CD8-positive, alpha-beta T cell (primary cell): ENCODE measurements at regions of chr18 and their contacts with region 1.

Region 1: DNA sequence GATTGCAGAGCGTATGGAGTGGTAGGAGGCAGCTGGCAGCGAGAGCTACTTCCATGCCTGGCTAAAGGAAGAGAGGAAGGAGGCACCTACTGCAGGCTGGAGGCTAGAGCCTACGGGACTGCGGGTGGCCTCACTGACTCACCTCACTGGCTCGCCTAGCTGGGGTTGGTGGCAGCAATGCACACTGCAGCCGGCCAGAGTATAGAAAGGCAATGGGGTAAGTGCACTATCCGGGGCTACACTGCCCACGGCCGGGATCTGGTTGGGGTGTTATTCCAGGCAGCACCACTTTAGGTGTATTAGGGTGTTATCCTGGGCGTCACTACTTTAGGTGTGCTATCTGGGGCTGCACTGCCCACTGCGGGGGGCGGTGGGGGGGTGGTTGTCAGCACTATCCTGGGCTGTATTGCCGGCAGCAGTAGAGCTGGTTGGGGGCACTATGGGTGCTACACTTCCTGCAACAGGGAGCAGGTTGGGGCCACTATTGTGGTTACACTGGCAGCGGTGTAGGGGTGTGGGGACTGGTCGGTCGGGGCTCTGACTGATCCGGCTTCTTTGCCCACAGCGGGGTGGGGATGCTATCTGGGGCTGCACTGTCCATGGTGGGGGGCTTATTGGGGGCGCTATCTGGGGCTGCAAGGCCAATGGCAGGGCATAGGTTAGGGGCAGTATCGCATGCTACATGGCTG is 33.3 kb upstream of the ANKRD62 start:
- DNase-seq: no peak
- ATAC-seq: no peak
- H3K4me3 ChIP-seq: no peak overlapping the region
- H3K4me3 Mint-ChIP-seq: no peak overlapping the region
- H3K27ac ChIP-seq: no peak overlapping the region
- H3K27ac Mint-ChIP-seq: no peak overlapping the region
- H3K4me1 ChIP-seq: no peaks in the 10 kb centered on the region
- H3K4me1 Mint-ChIP-seq: no peaks in the 10 kb centered on the region
- H3K27me3 ChIP-seq: no peaks in the 10 kb centered on the region
- H3K27me3 Mint-ChIP-seq: peaks cover 3% of the 10 kb centered on the region
- CTCF ChIP-seq: no peak

Region 2: DNA sequence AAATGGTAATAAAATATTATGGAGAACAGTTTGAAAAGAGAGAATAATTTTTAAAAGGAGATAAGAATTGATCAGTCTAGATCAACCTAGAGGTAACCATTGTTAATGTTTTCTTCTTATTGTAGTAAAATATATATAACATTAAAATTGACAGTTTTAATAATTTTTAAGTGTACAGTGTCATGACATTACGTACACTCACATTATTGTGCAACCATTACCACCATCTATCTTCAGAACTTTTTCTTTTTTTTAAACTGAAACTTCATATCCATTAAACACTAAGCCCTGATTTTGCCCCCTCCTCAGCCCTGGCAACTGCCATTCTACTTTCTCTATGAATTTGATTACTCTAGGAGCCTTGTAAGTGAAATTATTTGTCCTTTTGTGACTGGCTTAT is 1279.3 kb after region 1 on chr18:
- CTCF ChIA-PET with region 1: no interaction called
- POLR2A ChIA-PET with region 1: no interaction called
- intact Hi-C with region 1: loop called in 1 of 2 experiments (anchors 10 kb)
- DNase-seq: no peak
- ATAC-seq: no peak
- H3K4me3 ChIP-seq: no peak overlapping the region
- H3K4me3 Mint-ChIP-seq: no peak overlapping the region
- H3K27ac ChIP-seq: no peak overlapping the region
- H3K27ac Mint-ChIP-seq: no peak overlapping the region
- H3K4me1 ChIP-seq: no peaks in the 10 kb centered on the region
- H3K4me1 Mint-ChIP-seq: peaks cover 17% of the 10 kb centered on the region
- H3K27me3 ChIP-seq: no peaks in the 10 kb centered on the region
- H3K27me3 Mint-ChIP-seq: no peaks in the 10 kb centered on the region
- CTCF ChIP-seq: no peak